T-cell (primary cell): ENCODE measurements at regions of chr1 and their contacts with region 1.

Region 1: DNA sequence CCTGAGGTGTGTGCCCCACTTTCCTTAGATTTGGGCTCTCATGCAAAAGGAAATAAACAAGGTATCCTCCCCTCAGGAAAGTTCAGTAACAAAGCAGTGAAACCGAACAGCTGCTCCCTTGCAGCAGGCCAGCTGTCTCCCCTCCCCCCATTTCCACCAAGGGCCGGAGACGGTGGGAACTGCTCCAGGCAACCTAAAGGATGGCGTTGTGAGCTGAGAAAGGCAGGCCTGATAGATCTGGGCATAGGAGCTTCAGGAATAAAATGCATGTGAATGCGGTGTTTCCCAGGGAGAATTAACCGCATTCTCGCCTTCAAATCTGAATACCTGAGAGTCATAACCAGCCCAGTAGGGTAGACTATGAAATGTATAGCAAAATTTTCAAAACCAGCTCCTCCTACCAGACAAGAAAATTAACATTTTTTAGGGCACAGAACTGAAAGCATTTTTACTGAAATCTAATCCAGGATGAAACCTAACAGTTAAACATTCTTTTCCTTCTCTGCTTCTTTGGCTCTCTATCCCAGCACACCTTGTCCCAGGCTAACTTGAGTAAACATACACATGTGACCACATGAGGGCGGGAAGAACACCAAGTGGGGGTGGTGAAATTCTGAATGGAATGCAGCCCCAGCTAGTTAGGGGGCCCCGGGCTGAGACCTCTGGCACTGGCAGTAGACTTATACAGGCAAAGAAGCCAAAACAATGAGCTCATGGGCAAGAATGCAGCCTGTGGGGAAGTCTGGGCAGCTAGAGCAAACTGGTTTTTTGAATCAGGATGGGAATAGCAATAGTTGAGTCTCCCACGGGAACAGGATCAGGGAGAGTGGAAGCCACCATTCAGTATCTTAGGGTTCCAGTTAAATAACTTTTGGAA is 11.5 kb downstream of the MCL1 start:
- DNase-seq: peak in 11 of 35 experiments; percentile 25 to 60 (median 46)
- ATAC-seq: peak; percentile 14 to 27 (median 18)
- H3K4me3 ChIP-seq: peak overlapping the region; percentile 51 to 60
- H3K4me3 Mint-ChIP-seq: peak overlapping the region; percentile 82 to 95 (median 85)
- H3K27ac ChIP-seq: peak overlapping the region; percentile 84
- H3K27ac Mint-ChIP-seq: peak overlapping the region; percentile 98 to 99
- H3K4me1 ChIP-seq: peaks cover 67 to 99% of the 10 kb centered on the region in 2 experiments
- H3K4me1 Mint-ChIP-seq: peaks cover 94 to 95% (median 95%) of the 10 kb centered on the region in 3 donors
- H3K27me3 ChIP-seq: no peaks in the 10 kb centered on the region
- H3K27me3 Mint-ChIP-seq: no peaks in the 10 kb centered on the region

Region 2: GRCh38 chr1:150621497-150622302 is 53.7 kb after region 1 on chr1:
- CTCF ChIA-PET with region 1: interaction called, 5 to 106 read pairs
- POLR2A ChIA-PET with region 1: interaction called, 5 to 9 read pairs
- DNase-seq: peak; percentile 22 to 84 (median 60)
- ATAC-seq: peak; percentile 73 to 84 (median 78)
- H3K4me3 ChIP-seq: no peak overlapping the region
- H3K4me3 Mint-ChIP-seq: peak overlapping the region in 2 of 3 donors; percentile 17 to 34
- H3K27ac ChIP-seq: peak overlapping the region; percentile 40
- H3K27ac Mint-ChIP-seq: peak overlapping the region; percentile 86 to 92
- H3K4me1 ChIP-seq: peaks cover 10 to 21% of the 10 kb centered on the region in 2 experiments
- H3K4me1 Mint-ChIP-seq: peaks cover 33 to 59% (median 59%) of the 10 kb centered on the region in 3 donors
- H3K27me3 ChIP-seq: no peaks in the 10 kb centered on the region
- H3K27me3 Mint-ChIP-seq: no peaks in the 10 kb centered on the region

Region 3: GRCh38 chr1:150730130-150730721 is 162.3 kb after region 1 on chr1:
- CTCF ChIA-PET with region 1: no interaction called
- POLR2A ChIA-PET with region 1: no interaction called
- DNase-seq: no peak
- ATAC-seq: no peak
- H3K4me3 ChIP-seq: no peak overlapping the region
- H3K4me3 Mint-ChIP-seq: no peak overlapping the region
- H3K27ac ChIP-seq: no peak overlapping the region
- H3K27ac Mint-ChIP-seq: no peak overlapping the region
- H3K4me1 ChIP-seq: no peaks in the 10 kb centered on the region
- H3K4me1 Mint-ChIP-seq: no peaks in the 10 kb centered on the region
- H3K27me3 ChIP-seq: no peaks in the 10 kb centered on the region
- H3K27me3 Mint-ChIP-seq: no peaks in the 10 kb centered on the region